ENCODE measurements at regions of chr17 and their contacts with region 1.

Region 1: GRCh38 chr17:18033442-18034099 is 5.4 kb downstream of the ATPAF2 start:
- DNase-seq: peak; percentile 62
- H3K4me3 Mint-ChIP-seq: no peak overlapping the region
- H3K27ac Mint-ChIP-seq: no peak overlapping the region
- H3K4me1 Mint-ChIP-seq: peaks cover 28% of the 10 kb centered on the region
- H3K27me3 Mint-ChIP-seq: no peaks in the 10 kb centered on the region

Region 2: DNA sequence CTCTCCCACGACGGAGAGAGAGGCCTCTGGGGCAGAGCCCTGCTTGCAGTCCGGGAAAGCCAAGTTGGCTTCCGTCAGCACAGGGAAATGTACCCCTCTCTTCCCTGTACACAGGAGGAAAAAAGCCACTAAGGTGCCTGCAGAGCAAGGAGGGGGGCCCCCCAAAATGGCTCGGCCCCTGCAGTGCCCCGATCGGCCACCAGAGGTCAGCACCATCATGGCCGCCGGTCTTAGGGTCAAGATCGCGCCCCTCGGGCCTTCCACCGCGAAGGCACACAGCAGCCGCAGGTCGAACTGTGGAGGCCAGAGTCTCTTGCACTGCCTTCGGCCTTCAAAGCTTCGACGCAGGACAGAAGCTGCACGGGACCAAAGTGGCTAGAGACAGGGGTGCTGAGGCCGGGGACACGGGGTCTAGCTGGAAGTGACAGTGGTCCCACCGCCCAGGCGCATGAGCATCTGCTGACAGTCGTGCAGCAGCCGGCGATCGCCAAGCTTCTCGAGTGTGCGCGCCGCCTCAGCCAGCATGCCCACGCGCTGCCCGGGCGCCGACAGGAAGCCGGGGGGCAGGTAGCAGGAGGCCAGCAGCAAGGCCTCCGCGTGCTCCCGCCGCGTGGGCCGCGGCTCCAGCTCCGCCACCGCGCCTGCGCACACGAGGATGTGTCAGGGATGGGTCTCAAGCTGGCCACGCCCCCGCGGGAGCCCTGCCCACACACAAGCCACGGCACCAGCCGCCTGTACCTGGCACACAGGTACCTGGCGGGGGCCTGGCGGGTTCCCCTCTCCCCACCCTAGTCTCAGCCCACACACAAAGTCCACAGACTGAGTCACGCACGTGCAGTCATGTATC is 221.1 kb before region 1 on chr17:
- CTCF ChIA-PET with region 1: interaction called, 11 read pairs
- POLR2A ChIA-PET with region 1: no interaction called
- intact Hi-C with region 1: no loop called
- DNase-seq: peak; percentile 73
- H3K4me3 Mint-ChIP-seq: no peak overlapping the region
- H3K27ac Mint-ChIP-seq: peak overlapping the region; percentile 38
- H3K4me1 Mint-ChIP-seq: peaks cover 4% of the 10 kb centered on the region
- H3K27me3 Mint-ChIP-seq: no peaks in the 10 kb centered on the region

Region 3: GRCh38 chr17:17890773-17891759 is 142.5 kb before region 1 on chr17:
- CTCF ChIA-PET with region 1: interaction called, 37 read pairs
- POLR2A ChIA-PET with region 1: no interaction called
- intact Hi-C with region 1: loop called (anchors 1 kb)
- DNase-seq: peak; percentile 66
- H3K4me3 Mint-ChIP-seq: no peak overlapping the region
- H3K27ac Mint-ChIP-seq: no peak overlapping the region
- H3K4me1 Mint-ChIP-seq: no peaks in the 10 kb centered on the region
- H3K27me3 Mint-ChIP-seq: no peaks in the 10 kb centered on the region

Region 4: DNA sequence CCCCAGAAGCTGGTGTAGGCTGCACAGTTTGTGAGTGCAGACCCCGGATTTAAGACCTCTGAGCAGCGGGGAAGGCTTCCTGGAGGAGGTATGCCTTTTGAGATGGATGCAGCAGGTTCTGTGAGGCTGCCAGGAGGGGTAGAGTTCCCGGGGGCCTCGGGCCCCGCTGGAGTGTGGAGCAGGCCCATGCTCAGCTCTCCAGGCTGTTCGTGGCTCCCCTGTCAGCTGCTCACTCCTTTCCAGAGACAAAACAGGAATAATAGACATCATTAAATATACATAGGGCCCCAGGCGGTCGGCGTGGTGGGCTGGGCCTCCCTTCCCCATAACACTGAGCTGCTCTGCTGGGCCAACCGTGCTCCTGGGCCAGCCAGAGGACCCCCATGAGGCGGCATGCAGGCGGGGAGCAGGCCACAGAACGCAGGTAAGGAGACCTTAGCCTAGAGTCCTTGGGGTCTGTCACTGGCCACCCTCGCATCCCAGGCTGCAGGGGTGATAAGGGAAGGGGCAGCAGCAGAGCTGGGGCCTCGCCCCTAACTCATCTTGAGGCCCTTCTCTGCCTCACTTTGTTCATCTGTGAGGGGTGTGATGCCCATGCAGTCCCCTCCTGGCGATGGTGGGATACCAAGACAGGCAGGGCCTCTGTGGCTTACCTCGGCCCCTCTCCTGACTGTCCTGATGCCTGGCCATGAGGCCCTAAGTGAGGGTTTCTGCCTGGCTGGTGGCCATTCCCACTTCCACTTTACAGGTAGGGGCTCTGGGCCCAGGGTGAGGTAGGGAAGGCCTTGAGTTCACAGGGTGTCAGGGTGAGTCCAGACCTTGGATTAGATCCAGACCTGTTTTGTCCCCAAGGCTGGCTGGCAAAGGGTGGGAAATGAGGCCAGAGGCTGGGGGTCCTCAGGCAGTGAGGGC is 75.1 kb after region 1 on chr17 and contains the start of gene MYO15A:
- CTCF ChIA-PET with region 1: no interaction called
- POLR2A ChIA-PET with region 1: no interaction called
- intact Hi-C with region 1: no loop called
- DNase-seq: no peak
- H3K4me3 Mint-ChIP-seq: no peak within 1 kb of the TSS
- H3K27ac Mint-ChIP-seq: no peak within 1 kb of the TSS
- H3K4me1 Mint-ChIP-seq: no peaks in the 10 kb centered on the region
- H3K27me3 Mint-ChIP-seq: no peaks in the 10 kb centered on the region
- total RNA-seq, gene MYO15A: 0.78 to 1.3 TPM